Naive thymus-derived CD4-positive, alpha-beta T cell (primary cell): ENCODE measurements at regions of chr2 and their contacts with region 1.

Region 1: GRCh38 chr2:72993147-72993932 is 76.0 kb downstream of the EMX1 start:
- DNase-seq: peak; percentile 14 to 68 (median 42)
- ATAC-seq: peak; percentile 71
- H3K4me3 ChIP-seq: no peak overlapping the region
- H3K4me3 Mint-ChIP-seq: no peak overlapping the region
- H3K27ac ChIP-seq: no peak overlapping the region
- H3K27ac Mint-ChIP-seq: no peak overlapping the region
- H3K4me1 ChIP-seq: no peaks in the 10 kb centered on the region
- H3K4me1 Mint-ChIP-seq: peaks cover 0 to 9% (median 0%) of the 10 kb centered on the region in 7 donors
- H3K27me3 ChIP-seq: no peaks in the 10 kb centered on the region
- H3K27me3 Mint-ChIP-seq: no peaks in the 10 kb centered on the region

Region 2: DNA sequence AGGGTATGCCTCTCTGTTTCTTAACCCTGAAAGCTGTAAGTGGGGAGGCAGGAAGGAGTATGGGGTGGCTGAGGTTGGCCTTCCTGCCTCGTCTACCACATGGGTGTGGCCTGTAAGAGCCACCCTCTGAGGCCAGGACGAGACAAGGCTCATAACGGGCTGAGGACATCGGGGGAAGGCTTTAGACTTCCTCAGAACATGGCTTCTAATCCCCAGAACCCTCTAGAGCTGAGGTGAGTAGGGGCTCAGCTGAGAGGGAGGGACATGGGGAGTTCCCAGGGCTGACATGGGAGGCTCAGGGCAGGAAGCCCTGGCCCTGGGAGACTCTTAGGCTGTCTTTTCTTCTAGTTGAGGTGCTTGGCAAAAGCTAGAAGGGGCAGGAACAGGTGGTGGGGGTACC is 39.4 kb before region 1 on chr2:
- CTCF ChIA-PET with region 1: no interaction called
- POLR2A ChIA-PET with region 1: no interaction called
- intact Hi-C with region 1: no loop called
- DNase-seq: peak in 3 of 9 donors; percentile 1 to 39 (median 5)
- ATAC-seq: peak; percentile 73
- H3K4me3 ChIP-seq: peak overlapping the region; percentile 26
- H3K4me3 Mint-ChIP-seq: peak overlapping the region in 7 of 10 donors; percentile 16 to 95 (median 60)
- H3K27ac ChIP-seq: no peak overlapping the region
- H3K27ac Mint-ChIP-seq: peak overlapping the region in 4 of 9 donors; percentile 25 to 96 (median 43)
- H3K4me1 ChIP-seq: peaks cover 0 to 4% of the 10 kb centered on the region in 2 donors
- H3K4me1 Mint-ChIP-seq: peaks cover 13 to 35% (median 16%) of the 10 kb centered on the region in 7 donors
- H3K27me3 ChIP-seq: no peaks in the 10 kb centered on the region
- H3K27me3 Mint-ChIP-seq: peaks cover 0 to under 1% (median 0%) of the 10 kb centered on the region in 5 donors

Region 3: GRCh38 chr2:73156539-73157124 is 163.3 kb after region 1 on chr2:
- CTCF ChIA-PET with region 1: interaction called, 9 read pairs
- POLR2A ChIA-PET with region 1: no interaction called
- intact Hi-C with region 1: loop called in 1 of 2 experiments (anchors 1 kb)
- DNase-seq: peak in 3 of 9 donors; percentile 12 to 19 (median 16)
- ATAC-seq: peak; percentile 57
- H3K4me3 ChIP-seq: no peak overlapping the region
- H3K4me3 Mint-ChIP-seq: no peak overlapping the region
- H3K27ac ChIP-seq: no peak overlapping the region
- H3K27ac Mint-ChIP-seq: peak overlapping the region in 1 of 9 donors; percentile 75
- H3K4me1 ChIP-seq: no peaks in the 10 kb centered on the region
- H3K4me1 Mint-ChIP-seq: peaks cover 0 to 4% (median 0%) of the 10 kb centered on the region in 7 donors
- H3K27me3 ChIP-seq: peaks cover 0 to 6% of the 10 kb centered on the region in 2 donors
- H3K27me3 Mint-ChIP-seq: peaks cover 21 to 47% (median 35%) of the 10 kb centered on the region in 5 donors

Region 4: GRCh38 chr2:73163483-73164367 is 170.4 kb after region 1 on chr2:
- CTCF ChIA-PET with region 1: interaction called, 9 read pairs
- POLR2A ChIA-PET with region 1: no interaction called
- intact Hi-C with region 1: loop called (anchors 1 kb)
- DNase-seq: peak; percentile 31 to 66 (median 54)
- ATAC-seq: peak; percentile 88
- H3K4me3 ChIP-seq: no peak overlapping the region
- H3K4me3 Mint-ChIP-seq: no peak overlapping the region
- H3K27ac ChIP-seq: no peak overlapping the region
- H3K27ac Mint-ChIP-seq: no peak overlapping the region
- H3K4me1 ChIP-seq: no peaks in the 10 kb centered on the region
- H3K4me1 Mint-ChIP-seq: peaks cover 0 to 1% (median 0%) of the 10 kb centered on the region in 7 donors
- H3K27me3 ChIP-seq: no peaks in the 10 kb centered on the region
- H3K27me3 Mint-ChIP-seq: peaks cover 0 to 16% (median 11%) of the 10 kb centered on the region in 5 donors